Lower leg skin (tissue), 4 donors: ENCODE measurements at regions of chr11 and their contacts with region 1.

Region 1: GRCh38 chr11:10857709-10858438 is at the start of gene ZBED5:
- DNase-seq: peak; percentile 98 to 100
- H3K4me3 ChIP-seq: peak within 1 kb of the TSS; percentile 86
- CTCF ChIP-seq: no peak
- POLR2A ChIP-seq: peak in 1 of 2 donors; percentile 60
- total RNA-seq, gene ZBED5: 29.0 to 38.0 (median 36.0) TPM

Region 2: DNA sequence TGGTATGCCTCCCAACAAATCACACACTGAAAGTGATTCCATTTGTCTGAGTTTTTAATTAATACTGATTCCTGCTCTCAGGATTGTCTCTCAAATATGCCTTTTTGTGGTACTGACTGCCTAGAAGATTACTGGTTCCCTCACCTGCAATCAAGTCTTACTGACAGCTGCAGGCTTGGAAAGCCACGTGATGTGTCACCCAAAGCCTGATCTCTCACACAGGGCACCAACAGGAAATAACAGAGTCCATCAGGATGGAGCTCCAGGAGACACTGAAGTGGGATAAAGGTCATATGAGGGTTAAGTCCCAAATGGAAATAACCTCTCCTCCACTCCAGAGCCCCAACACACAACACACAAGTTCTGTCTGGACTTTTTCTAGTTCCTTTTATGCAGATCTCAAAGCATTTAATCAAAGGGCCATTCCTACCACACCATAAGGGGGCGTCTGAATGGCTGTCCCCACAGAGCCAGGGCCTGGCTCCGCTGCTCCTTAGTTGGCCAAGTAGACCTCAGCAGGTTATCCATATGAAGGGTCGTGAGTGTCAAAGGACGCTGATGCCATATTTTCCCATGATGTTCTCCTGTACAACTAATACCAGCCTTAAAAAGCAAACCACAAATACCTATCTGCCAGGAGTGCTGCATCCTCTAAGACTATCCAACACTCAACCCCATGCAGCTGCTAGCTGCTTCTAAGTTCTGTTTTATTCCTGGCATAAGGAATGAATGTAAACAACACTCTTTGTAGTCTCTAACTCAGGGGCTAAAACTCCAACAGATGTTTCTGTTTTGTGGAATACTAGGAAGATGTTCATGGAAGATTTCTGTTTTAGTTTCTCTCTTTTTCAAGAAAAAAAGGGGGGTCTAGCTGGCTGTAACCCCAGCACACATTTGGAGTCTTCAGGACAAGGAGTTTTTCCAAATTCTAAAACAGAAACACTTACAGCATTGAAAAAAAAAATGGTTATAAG is 1779.5 kb before region 1 on chr11:
- intact Hi-C with region 1: no loop called
- DNase-seq: no peak
- H3K4me3 ChIP-seq: no peak overlapping the region
- CTCF ChIP-seq: no peak
- POLR2A ChIP-seq: no peak

Region 3: GRCh38 chr11:10455637-10456487 is 402.0 kb before region 1 on chr11:
- intact Hi-C with region 1: no loop called
- DNase-seq: peak in 1 of 2 donors; percentile 52
- H3K4me3 ChIP-seq: peak overlapping the region; percentile 4
- CTCF ChIP-seq: no peak
- POLR2A ChIP-seq: no peak

Region 4: DNA sequence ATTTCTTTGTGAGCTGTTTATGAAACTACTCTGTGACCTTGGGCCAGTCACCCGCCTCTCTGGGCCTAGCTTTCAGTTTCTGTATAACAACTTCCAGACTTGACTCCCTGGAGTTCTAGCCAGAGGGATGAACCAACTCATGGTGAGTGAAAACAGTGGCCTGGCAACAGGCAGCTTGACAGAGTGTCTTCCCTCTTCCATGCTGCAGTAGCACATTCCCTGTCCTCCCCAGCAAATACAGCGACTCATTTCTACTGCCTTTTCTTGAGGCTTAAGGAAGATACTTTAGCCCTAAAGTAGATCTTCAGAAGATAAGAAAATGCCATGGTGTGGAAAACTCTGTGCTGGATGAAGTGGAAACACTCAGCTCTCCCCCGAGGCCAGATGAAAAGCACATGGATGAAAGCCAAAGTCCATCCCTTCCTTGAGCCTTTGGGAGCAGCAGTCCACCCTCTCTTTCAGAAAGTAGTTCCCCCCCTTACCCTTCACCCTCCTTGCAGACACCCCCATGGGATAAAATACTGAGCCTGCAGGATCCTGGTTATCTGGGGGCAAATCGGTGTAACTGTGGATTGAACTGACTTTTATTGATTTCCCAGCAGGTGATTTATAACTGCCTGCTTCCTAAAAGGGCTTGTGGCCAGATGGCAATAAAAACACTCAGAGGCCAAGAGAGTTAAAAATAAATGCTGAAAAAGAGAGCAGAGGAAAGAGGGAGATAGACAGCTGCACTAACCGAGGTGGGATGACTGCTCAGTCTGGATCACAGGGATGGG is 188.4 kb before region 1 on chr11:
- intact Hi-C with region 1: no loop called
- DNase-seq: no peak
- H3K4me3 ChIP-seq: no peak overlapping the region
- CTCF ChIP-seq: no peak
- POLR2A ChIP-seq: no peak

Region 5: DNA sequence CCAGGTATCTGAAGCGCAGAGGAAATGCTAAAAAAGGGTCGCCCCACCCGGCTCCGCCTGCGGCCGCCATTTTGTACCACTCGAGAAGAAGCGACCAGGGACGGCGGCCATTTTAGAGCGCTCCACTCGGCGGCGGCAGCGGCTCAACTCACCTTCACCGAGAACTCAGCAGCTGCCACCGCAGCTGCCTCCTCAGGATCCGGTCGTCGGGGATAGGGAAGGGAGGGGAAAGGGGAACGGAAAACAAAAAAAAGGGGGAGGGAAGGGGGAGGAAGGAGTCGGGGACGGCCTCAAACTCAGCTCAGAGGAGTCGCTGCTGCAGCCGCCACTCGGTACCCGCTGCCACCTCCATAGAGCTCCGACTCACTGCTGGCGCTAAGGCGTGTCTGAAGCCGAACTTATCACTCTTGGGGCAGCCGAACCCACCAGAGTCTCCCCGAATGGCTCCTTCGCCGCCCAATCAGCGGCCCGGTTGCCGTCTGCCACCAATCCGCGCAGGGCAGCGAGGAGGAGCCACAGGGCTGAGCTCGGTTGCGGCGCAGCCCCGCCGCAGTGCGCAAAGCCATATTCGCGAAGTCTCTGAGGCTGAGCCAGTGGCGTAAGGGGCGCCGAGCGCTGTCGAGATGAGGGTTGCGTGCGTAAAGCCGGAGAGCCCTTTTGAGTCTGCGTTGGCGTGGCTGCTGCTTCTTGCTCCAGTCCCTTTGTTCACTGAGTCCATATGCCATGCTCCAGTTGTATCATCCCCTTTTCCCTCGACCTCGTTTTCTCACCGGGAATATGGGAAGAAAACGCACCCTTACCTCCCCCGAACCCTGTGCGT is 49.1 kb before region 1 on chr11 and contains the start of gene EIF4G2:
- intact Hi-C with region 1: loop called (anchors 1 kb)
- DNase-seq: peak; percentile 98 to 100
- H3K4me3 ChIP-seq: peak within 1 kb of the TSS; percentile 97
- CTCF ChIP-seq: no peak
- POLR2A ChIP-seq: peak in 1 of 2 donors; percentile 98
- total RNA-seq, gene EIF4G2: 380 to 450 (median 415) TPM